Naive thymus-derived CD8-positive, alpha-beta T cell (primary cell): ENCODE measurements at regions of chr3 and their contacts with region 1.

Region 1: DNA sequence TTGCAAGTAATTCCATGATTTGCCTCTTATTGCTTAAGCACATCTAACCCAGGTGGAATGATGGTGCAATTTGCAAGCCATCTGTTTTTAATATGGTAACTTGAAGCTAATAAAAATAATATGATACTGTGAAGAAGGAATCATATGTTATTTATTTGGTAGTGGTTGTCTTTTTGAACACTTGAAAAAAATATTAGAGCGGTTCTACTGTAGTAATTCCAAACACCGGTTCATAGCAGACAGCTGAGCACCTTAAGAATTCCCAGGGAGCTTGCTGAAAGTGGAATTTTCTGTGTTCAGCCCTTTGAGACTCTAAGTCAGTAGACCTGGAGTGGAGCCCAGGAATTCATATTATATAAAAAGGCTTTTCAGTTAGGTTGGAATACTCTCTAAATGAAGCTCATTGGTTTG is 687.4 kb downstream of the EDEM1 start:
- DNase-seq: no peak
- ATAC-seq: no peak
- H3K4me3 Mint-ChIP-seq: no peak overlapping the region
- H3K27ac Mint-ChIP-seq: no peak overlapping the region
- H3K4me1 Mint-ChIP-seq: no peaks in the 10 kb centered on the region
- H3K27me3 Mint-ChIP-seq: peaks cover 0 to 2% (median 0%) of the 10 kb centered on the region in 5 donors

Region 2: GRCh38 chr3:5891711-5892110 is 16.8 kb after region 1 on chr3:
- POLR2A ChIA-PET with region 1: interaction called, 16 read pairs
- DNase-seq: no peak
- ATAC-seq: no peak
- H3K4me3 Mint-ChIP-seq: no peak overlapping the region
- H3K27ac Mint-ChIP-seq: no peak overlapping the region
- H3K4me1 Mint-ChIP-seq: no peaks in the 10 kb centered on the region
- H3K27me3 Mint-ChIP-seq: no peaks in the 10 kb centered on the region

Region 3: GRCh38 chr3:5929027-5929426 is 54.1 kb after region 1 on chr3:
- POLR2A ChIA-PET with region 1: no interaction called
- DNase-seq: no peak
- ATAC-seq: no peak
- H3K4me3 Mint-ChIP-seq: no peak overlapping the region
- H3K27ac Mint-ChIP-seq: no peak overlapping the region
- H3K4me1 Mint-ChIP-seq: no peaks in the 10 kb centered on the region
- H3K27me3 Mint-ChIP-seq: no peaks in the 10 kb centered on the region